Heart left ventricle (tissue), 16 donors: ENCODE measurements at regions of chr15 and their contacts with region 1.

Region 1: DNA sequence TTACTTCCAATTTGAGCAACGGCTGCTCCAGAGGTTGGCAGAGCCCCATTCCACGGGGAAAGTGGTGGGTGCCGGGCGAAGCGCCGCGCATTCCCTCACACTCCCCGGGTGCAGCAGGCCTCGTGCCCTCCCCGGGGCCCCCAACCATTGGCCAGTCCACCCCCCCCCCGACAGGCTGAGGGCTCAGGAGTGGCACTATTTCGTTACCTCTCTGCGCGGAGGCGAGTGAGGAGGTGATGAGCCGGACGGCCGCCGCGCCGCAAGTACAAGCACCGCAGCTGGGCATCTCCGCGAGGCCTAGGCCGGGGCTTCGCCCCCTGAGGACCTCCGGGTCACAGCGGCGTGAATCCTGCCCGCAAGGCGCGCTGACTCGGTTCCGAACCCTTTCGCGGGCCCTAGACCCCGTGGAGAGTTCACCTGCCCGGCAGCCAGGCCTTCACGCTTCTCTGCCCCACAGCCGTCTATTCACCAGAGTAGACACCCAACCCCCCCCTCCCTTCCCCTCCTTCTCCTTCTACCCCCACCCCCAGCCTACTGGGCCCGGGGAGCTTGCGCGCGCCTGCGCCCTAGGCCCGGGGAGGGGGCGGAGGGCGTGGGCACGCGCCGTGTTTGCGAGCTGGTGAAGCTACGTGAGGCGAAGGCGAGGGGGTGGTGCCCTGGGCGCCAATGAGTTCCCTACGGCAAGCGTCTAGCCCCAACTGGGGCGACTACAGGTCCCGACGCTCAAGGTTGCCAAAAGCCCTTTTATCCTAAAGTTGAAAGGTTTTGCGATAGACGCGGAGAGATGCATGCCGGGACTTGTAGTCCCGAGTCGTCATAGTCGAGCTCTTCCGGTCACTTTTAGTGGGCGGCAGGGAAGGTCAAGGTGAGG is at the start of gene CLPX:
- DNase-seq: peak; percentile 92 to 96 (median 94)
- ATAC-seq: peak; percentile 94 to 98 (median 96)
- H3K4me3 ChIP-seq: peak within 1 kb of the TSS; percentile 60 to 100 (median 86)
- H3K27ac ChIP-seq: peak within 1 kb of the TSS; percentile 62 to 99 (median 96)
- H3K4me1 ChIP-seq: peaks cover 0 to 35% (median 18%) of the 10 kb centered on the region in 12 donors
- H3K27me3 ChIP-seq: no peaks in the 10 kb centered on the region
- CTCF ChIP-seq: no peak
- POLR2A ChIP-seq: peak in 1 of 2 donors; percentile 52
- total RNA-seq, gene CLPX: 43.8 to 64.8 (median 57.2) TPM

Region 2: DNA sequence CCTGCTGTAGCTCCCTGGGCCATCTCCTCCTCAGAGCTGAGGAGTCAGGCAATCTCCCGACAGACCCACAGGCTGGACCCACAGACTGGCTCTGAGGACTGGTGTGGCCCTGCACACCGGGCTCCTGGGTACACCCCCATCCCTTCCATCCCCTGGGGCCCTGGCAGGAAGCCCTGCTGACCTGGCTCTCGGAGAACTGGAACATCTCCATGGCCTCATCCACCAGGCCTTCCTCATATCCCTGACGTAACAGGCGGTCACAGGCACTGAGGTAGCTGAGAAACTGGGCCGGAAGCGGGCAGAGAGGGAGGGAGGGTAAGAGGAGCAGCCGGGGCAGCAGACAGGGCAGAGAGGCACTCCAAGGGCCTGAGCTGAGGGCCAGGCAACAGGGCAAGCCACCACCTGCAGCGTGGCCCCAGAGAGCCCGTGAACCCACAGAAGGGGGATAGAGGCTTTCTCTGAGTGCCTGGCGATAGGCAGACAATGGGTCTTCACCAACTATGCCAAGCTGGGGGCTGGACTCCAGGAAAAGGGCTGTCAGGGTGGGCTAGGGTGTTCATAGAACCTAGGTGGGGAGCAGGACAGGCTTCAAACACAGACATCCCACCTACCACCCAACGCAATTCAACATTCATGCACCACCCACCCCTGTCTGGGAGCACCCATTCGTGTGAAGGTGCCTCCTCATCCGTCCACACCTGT is 90.7 kb before region 1 on chr15:
- intact Hi-C with region 1: no loop called
- DNase-seq: peak in 2 of 5 donors; percentile 52 to 79
- ATAC-seq: peak in 3 of 4 donors; percentile 58 to 76 (median 70)
- H3K4me3 ChIP-seq: no peak overlapping the region
- H3K27ac ChIP-seq: peak overlapping the region in 3 of 12 donors; percentile 19 to 71 (median 53)
- H3K4me1 ChIP-seq: peaks cover 0 to 29% (median 8%) of the 10 kb centered on the region in 12 donors
- H3K27me3 ChIP-seq: no peaks in the 10 kb centered on the region
- CTCF ChIP-seq: no peak
- POLR2A ChIP-seq: no peak

Region 3: DNA sequence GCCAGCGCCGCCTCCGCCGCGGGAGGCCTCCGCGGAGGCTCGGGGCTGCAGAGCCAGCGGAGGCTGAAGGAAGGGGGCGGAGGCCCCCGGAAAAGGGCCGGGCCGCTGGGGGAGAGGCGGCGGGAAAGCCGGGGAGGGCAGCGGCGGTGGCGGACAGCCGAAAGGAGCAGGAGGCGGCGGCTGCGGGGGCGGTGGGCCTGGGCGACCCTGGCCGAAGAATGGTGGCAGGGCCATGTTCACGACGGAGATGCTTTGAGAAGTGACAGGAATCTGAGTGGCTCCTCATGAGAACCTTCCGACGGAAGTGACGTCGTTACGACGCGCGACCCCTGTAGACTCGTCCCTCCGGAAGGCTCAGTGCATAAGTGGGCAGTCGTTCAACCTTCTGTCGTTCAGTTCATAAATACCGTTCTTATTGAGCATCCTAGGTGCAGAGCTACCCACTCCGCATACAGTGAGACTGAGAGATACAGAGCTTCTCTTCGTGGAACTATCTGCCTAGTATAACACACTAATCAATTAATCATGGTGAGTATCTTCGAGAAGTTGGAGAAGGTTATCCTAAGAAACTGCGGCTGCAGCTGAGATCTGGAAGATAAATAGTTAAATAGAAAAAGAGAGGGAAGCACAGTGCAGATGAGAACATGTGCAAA is 51.4 kb before region 1 on chr15 and contains the start of gene PDCD7:
- intact Hi-C with region 1: loop called in 1 of 10 experiments (anchors 5 kb)
- DNase-seq: peak; percentile 87 to 94 (median 90)
- ATAC-seq: peak; percentile 88 to 97 (median 96)
- H3K4me3 ChIP-seq: peak within 1 kb of the TSS; percentile 70 to 93 (median 87)
- H3K27ac ChIP-seq: peak within 1 kb of the TSS; percentile 55 to 90 (median 86)
- H3K4me1 ChIP-seq: peaks cover 0 to 33% (median 21%) of the 10 kb centered on the region in 12 donors
- H3K27me3 ChIP-seq: no peaks in the 10 kb centered on the region
- CTCF ChIP-seq: no peak
- POLR2A ChIP-seq: peak in 1 of 2 donors; percentile 69
- total RNA-seq, gene PDCD7: 9.5 to 21.9 (median 13.9) TPM

Region 4: GRCh38 chr15:65146438-65146837 is 38.7 kb before region 1 on chr15:
- intact Hi-C with region 1: no loop called
- DNase-seq: no peak
- ATAC-seq: no peak
- H3K4me3 ChIP-seq: no peak overlapping the region
- H3K27ac ChIP-seq: no peak overlapping the region
- H3K4me1 ChIP-seq: no peaks in the 10 kb centered on the region
- H3K27me3 ChIP-seq: no peaks in the 10 kb centered on the region
- CTCF ChIP-seq: no peak
- POLR2A ChIP-seq: no peak

Region 5: GRCh38 chr15:65286704-65287519 is 101.8 kb after region 1 on chr15 and contains the start of gene PARP16:
- intact Hi-C with region 1: loop called in 3 of 10 experiments (anchors 5 kb)
- DNase-seq: peak; percentile 92 to 96 (median 93)
- ATAC-seq: peak; percentile 85 to 97 (median 95)
- H3K4me3 ChIP-seq: peak within 1 kb of the TSS; percentile 54 to 95 (median 76)
- H3K27ac ChIP-seq: peak within 1 kb of the TSS; percentile 70 to 95 (median 91)
- H3K4me1 ChIP-seq: peaks cover 0 to 21% (median 15%) of the 10 kb centered on the region in 12 donors
- H3K27me3 ChIP-seq: no peaks in the 10 kb centered on the region
- CTCF ChIP-seq: peak; percentile 22 to 83 (median 61)
- POLR2A ChIP-seq: peak in 1 of 2 donors; percentile 87
- total RNA-seq, gene PARP16: 2.7 to 7.0 (median 4.8) TPM

Region 6: DNA sequence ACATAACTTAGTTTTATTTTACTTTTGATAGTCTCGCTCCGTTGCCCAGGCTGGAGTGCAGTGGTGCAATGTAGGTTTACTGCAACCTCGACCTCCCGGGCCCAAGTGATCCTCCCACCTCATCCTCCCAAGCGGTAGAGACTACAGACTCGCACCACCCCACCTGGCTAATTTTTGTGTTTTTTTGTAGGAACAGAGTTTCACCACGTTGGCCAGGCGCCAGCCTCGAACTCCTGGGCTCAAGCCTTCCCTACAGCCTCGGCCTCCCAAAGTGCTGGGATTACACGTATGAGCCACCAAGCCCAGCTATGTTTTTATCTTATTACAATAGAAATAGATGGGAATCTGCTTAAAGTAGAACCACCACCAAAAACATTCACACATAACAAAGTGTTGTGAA is 113.6 kb after region 1 on chr15:
- intact Hi-C with region 1: loop called in 6 of 10 experiments (anchors 1 to 2 kb)
- DNase-seq: no peak
- ATAC-seq: no peak
- H3K4me3 ChIP-seq: no peak overlapping the region
- H3K27ac ChIP-seq: no peak overlapping the region
- H3K4me1 ChIP-seq: peaks cover 0 to 24% (median 8%) of the 10 kb centered on the region in 12 donors
- H3K27me3 ChIP-seq: no peaks in the 10 kb centered on the region
- CTCF ChIP-seq: no peak
- POLR2A ChIP-seq: no peak

Region 7: DNA sequence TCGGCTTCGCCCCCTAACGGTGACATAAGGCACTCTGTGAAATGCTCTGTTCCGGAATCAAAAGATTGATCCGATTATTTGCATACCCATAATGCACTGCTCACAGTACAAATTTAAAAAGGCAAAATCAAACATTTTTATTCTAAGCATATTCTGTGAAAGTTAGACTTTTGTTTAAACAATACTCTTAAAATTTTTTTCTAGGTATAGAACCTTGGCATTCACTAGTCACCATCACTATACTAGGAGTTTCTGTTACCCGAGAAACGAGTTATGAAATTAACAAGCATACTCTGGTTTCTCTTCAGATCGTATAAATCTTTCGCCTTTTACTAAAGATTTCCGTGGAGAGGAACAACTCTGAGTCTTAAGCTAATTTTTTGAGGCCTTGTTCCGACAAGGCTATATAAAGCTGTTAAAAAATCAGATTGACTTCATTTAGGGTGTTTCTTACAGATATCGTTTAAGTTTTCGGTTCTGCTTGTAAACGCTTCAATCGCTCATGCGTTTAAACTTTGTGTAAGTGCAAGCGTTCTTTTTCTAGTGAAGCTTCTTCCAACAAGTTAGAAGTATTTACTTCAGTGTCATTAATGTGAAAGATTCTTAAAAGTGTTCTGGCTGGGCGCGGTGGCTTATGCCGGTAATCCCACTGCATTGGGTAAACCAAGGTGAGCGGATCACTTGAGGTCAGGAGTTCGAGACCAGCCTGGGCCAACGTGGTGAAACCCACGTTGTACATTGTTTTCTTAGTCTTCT is 119.5 kb after region 1 on chr15 and contains the start of gene RNU5B-1:
- intact Hi-C with region 1: loop called in 2 of 10 experiments (anchors 2 kb)
- DNase-seq: peak; percentile 52 to 81 (median 77)
- ATAC-seq: peak; percentile 83 to 92 (median 90)
- H3K4me3 ChIP-seq: peak within 1 kb of the TSS; percentile 30 to 74 (median 56)
- H3K27ac ChIP-seq: peak within 1 kb of the TSS; percentile 77 to 94 (median 91)
- H3K4me1 ChIP-seq: peaks cover 0 to 15% (median 11%) of the 10 kb centered on the region in 12 donors
- H3K27me3 ChIP-seq: no peaks in the 10 kb centered on the region
- CTCF ChIP-seq: peak in 9 of 12 donors; percentile 79 to 97 (median 87)
- POLR2A ChIP-seq: peak in 1 of 2 donors; percentile 84
- total RNA-seq, gene RNU5B-1: 18.6 to 30.4 TPM in 2 of 9 donors, not detected in the others